AG04449 (cell line): ENCODE measurements at regions of chr3 and their contacts with region 1.

Region 1: DNA sequence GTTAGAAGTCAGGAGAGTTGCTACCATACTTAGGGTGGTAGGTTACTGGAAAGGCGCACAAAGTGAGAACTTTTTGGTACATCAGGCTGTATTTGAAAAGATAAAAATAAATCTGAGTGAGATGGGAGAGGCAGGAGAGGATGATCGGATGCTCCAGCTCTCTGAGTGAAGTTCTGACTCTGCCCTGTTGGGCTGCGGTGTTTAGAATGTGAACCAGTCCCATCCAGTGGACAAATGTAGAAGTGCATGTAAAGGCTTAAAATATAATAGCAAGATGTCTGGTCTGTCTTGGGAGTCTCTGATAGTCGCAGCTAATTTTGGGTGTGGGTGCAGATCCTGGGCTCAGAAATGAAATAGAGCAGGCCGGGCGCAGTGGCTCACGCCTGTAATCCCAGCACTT is 30.4 kb downstream of the ACKR2 start:
- DNase-seq: peak; percentile 24
- H3K4me3 ChIP-seq: no peak overlapping the region; the same call in 1 of the 2 replicates
- CTCF ChIP-seq: peak; percentile 61

Region 2: DNA sequence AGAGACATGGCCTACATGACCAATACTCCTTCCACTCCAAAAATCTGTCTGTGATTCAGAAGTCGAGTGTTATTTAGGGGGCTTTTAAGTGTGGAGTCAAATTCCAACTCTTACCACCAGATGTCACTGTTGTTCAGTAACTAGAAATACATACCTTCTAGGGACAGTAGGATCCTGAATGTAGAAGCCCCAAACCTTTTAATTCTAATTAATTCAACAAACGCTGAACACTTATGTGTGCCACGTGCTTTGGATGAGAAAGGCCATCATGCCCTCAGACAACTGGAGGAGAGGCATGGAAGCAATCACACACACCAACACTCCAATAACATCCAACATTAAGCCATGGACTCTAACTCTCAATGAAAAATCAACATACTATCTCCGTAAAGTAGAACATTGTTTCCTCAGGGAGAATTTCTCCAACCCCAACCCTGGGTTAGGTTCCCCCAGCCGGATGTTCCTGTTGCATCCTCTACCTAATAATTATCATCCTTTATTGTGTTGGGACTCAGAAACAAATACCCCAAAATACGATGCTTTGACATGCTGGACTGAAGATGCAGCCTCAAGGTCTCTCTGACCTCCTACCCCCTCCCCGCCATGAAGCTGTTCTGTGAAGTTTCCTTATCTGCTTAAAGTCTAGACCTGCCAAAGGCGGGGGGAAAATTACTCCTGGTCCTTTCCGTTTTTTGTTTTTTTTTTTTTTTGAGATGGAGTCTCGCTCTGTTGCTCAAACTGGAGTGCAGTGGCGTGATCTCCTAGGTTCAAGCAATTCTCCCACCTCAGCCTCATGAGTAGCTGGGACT is 58.5 kb before region 1 on chr3:
- CTCF ChIA-PET with region 1: interaction called, 51 read pairs
- POLR2A ChIA-PET with region 1: no interaction called
- DNase-seq: no peak
- H3K4me3 ChIP-seq: no peak overlapping the region
- CTCF ChIP-seq: peak; percentile 45

Region 3: GRCh38 chr3:42786212-42786611 is 53.4 kb before region 1 on chr3:
- CTCF ChIA-PET with region 1: interaction called, 23 read pairs
- POLR2A ChIA-PET with region 1: no interaction called
- DNase-seq: no peak
- H3K4me3 ChIP-seq: no peak overlapping the region
- CTCF ChIP-seq: no peak

Region 4: DNA sequence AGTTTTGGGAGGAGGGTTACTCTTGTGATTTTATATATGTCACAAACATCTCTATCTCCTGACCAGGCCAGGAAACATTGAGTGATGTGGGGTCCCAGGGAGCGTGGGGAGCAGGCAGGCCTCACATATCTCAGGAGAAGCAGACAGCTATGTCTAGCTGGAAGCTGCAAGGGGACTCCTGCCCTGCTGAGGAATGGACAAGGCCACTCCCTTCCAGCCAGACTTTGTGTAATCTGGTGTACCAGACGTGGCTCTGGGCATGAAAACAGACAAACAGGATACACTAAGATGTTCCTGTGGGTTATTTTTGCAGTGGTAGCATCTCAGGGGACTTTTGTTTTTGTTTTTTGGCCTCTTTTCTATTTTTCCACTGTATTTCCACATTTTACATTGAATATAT is 12.8 kb after region 1 on chr3:
- CTCF ChIA-PET with region 1: interaction called, 22 read pairs
- POLR2A ChIA-PET with region 1: no interaction called
- DNase-seq: no peak
- H3K4me3 ChIP-seq: no peak overlapping the region
- CTCF ChIP-seq: no peak